MCF 10A (cell line): ENCODE measurements at regions of chr3 and their contacts with region 1.

Region 1: GRCh38 chr3:156674046-156674910 is at the start of gene TIPARP:
- DNase-seq: peak; percentile 97
- H3K4me3 Mint-ChIP-seq: peak within 1 kb of the TSS; percentile 79
- H3K27ac Mint-ChIP-seq: peak within 1 kb of the TSS; percentile 89
- H3K4me1 Mint-ChIP-seq: peaks cover 20% of the 10 kb centered on the region
- H3K27me3 Mint-ChIP-seq: no peaks in the 10 kb centered on the region
- CTCF ChIP-seq: peak; percentile 40
- total RNA-seq, gene TIPARP: 41.6 and 50.0 TPM in 2 replicates

Region 2: GRCh38 chr3:156630081-156630772 is 44.1 kb before region 1 on chr3:
- CTCF ChIA-PET with region 1: interaction called, 6 read pairs
- POLR2A ChIA-PET with region 1: interaction called, 11 read pairs
- intact Hi-C with region 1: no loop called
- DNase-seq: peak; percentile 60
- H3K4me3 Mint-ChIP-seq: no peak overlapping the region
- H3K27ac Mint-ChIP-seq: no peak overlapping the region
- H3K4me1 Mint-ChIP-seq: peaks cover 16% of the 10 kb centered on the region
- H3K27me3 Mint-ChIP-seq: no peaks in the 10 kb centered on the region
- CTCF ChIP-seq: no peak

Region 3: GRCh38 chr3:156735471-156735870 is 61.2 kb after region 1 on chr3:
- CTCF ChIA-PET with region 1: no interaction called
- POLR2A ChIA-PET with region 1: no interaction called
- intact Hi-C with region 1: no loop called
- DNase-seq: no peak
- H3K4me3 Mint-ChIP-seq: no peak overlapping the region
- H3K27ac Mint-ChIP-seq: no peak overlapping the region
- H3K4me1 Mint-ChIP-seq: no peaks in the 10 kb centered on the region
- H3K27me3 Mint-ChIP-seq: no peaks in the 10 kb centered on the region
- CTCF ChIP-seq: no peak

Region 4: DNA sequence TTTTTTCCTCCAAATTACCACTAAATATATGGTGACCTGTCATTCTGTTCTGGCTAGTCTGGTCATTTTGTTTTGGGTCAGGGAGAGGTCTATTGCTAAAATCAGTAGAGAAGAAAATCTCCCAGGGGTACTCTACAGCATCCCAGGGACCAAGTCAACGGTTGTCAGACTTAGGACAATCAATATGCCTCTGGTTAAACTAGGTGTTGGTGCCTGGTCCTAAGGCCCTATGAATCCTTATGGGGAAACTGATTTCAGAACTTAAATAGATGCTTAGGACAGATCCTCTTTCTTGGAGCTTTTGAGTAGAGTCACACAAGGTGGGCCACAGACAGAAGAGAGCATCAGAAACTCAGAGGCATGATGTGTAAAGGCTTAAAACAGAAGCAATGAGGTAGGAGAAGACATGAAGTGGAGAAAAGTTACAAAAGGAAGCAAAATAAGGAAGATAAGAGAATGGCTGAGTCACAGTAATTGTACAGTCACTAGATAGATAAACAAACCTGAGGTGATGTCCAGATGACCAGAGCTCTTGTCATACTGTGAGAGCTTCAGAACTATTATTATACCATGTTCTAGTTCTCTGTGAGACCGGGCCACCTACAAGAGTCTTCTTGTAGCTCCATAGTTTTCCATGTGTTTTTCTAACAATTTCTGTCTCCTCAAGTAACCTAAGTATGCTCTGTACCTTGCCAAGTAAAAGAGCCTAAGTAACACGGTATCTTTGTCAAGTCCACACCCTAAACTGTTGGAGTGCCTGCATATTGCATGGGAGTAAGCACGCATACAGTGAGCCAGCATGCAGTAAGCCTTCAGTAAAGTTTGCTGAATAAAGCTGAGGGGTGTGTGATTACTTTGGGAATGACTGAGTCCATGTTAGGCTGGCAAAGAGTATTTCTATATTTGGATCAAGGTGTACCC is 107.3 kb after region 1 on chr3:
- CTCF ChIA-PET with region 1: interaction called, 3 read pairs
- POLR2A ChIA-PET with region 1: interaction called, 22 read pairs
- intact Hi-C with region 1: no loop called
- DNase-seq: peak; percentile 39
- H3K4me3 Mint-ChIP-seq: no peak overlapping the region
- H3K27ac Mint-ChIP-seq: peak overlapping the region; percentile 83
- H3K4me1 Mint-ChIP-seq: peaks cover 41% of the 10 kb centered on the region
- H3K27me3 Mint-ChIP-seq: no peaks in the 10 kb centered on the region
- CTCF ChIP-seq: no peak

Region 5: GRCh38 chr3:156865732-156866131 is 191.5 kb after region 1 on chr3:
- CTCF ChIA-PET with region 1: interaction called, 3 read pairs
- POLR2A ChIA-PET with region 1: interaction called, 4 read pairs
- intact Hi-C with region 1: loop called (anchors 5 kb)
- DNase-seq: no peak
- H3K4me3 Mint-ChIP-seq: no peak overlapping the region
- H3K27ac Mint-ChIP-seq: no peak overlapping the region
- H3K4me1 Mint-ChIP-seq: peaks cover 6% of the 10 kb centered on the region
- H3K27me3 Mint-ChIP-seq: no peaks in the 10 kb centered on the region
- CTCF ChIP-seq: no peak

Region 6: GRCh38 chr3:156943430-156943829 is 269.2 kb after region 1 on chr3:
- CTCF ChIA-PET with region 1: no interaction called
- POLR2A ChIA-PET with region 1: no interaction called
- intact Hi-C with region 1: no loop called
- DNase-seq: no peak
- H3K4me3 Mint-ChIP-seq: no peak overlapping the region
- H3K27ac Mint-ChIP-seq: no peak overlapping the region
- H3K4me1 Mint-ChIP-seq: no peaks in the 10 kb centered on the region
- H3K27me3 Mint-ChIP-seq: no peaks in the 10 kb centered on the region
- CTCF ChIP-seq: no peak

Region 7: DNA sequence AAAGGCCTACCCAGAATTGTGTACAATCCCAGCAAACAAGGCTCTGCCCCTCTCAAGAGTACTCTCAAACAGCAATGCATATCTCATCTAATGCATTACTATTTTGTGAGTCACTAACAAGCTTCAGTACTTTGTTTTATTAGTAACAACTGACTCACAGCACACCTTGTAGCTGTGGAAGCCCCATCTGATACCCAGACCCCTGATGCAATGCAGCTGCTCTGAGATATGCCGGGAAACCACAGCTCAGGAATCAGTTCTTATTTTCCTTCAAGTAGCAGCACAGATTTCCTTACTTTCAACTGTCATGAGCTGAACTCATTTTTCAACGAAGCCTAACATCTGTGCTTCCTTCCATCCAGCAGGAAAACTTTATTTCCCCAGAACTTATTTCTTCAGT is 447.8 kb after region 1 on chr3:
- CTCF ChIA-PET with region 1: no interaction called
- POLR2A ChIA-PET with region 1: interaction called, 72 read pairs
- intact Hi-C with region 1: no loop called
- DNase-seq: peak; percentile 80
- H3K4me3 Mint-ChIP-seq: no peak overlapping the region
- H3K27ac Mint-ChIP-seq: peak overlapping the region; percentile 82
- H3K4me1 Mint-ChIP-seq: peaks cover 31% of the 10 kb centered on the region
- H3K27me3 Mint-ChIP-seq: no peaks in the 10 kb centered on the region
- CTCF ChIP-seq: no peak

Region 8: GRCh38 chr3:157174649-157175498 is 500.6 kb after region 1 on chr3:
- CTCF ChIA-PET with region 1: no interaction called
- POLR2A ChIA-PET with region 1: interaction called, 11 read pairs
- intact Hi-C with region 1: no loop called
- DNase-seq: peak; percentile 99
- H3K4me3 Mint-ChIP-seq: peak overlapping the region; percentile 83
- H3K27ac Mint-ChIP-seq: peak overlapping the region; percentile 98
- H3K4me1 Mint-ChIP-seq: peaks cover 6% of the 10 kb centered on the region
- H3K27me3 Mint-ChIP-seq: no peaks in the 10 kb centered on the region
- CTCF ChIP-seq: no peak